ENCODE measurements at regions of chr9 and their contacts with region 1.

Region 1: GRCh38 chr9:111759762-111760639 is 34.7 kb downstream of the SHOC1 start:
- DNase-seq: no peak
- ATAC-seq: peak; percentile 82

Region 2: DNA sequence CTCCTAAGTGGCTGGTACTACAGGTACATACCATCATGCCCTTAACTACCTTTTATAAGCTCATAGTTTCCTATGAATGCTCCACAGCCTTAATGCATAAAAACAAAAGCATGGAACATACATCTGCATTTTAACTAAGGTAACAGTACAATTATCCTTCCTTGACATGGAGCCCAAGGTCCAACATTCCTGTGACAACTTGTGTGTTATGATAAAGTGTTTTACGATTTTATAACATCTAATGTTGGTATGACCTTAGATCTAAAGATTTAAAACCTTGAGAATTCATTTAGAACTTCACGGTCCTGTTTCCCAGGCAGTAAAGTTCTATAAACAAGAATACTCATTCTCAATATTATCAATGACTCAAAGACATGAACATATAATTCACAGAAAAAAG is 55.5 kb before region 1 on chr9:
- intact Hi-C with region 1: no loop called
- DNase-seq: no peak
- ATAC-seq: no peak

Region 3: GRCh38 chr9:112074250-112075008 is 314.4 kb after region 1 on chr9:
- intact Hi-C with region 1: loop called (anchors 1 kb)
- DNase-seq: peak; percentile 48
- ATAC-seq: peak; percentile 90

Region 4: DNA sequence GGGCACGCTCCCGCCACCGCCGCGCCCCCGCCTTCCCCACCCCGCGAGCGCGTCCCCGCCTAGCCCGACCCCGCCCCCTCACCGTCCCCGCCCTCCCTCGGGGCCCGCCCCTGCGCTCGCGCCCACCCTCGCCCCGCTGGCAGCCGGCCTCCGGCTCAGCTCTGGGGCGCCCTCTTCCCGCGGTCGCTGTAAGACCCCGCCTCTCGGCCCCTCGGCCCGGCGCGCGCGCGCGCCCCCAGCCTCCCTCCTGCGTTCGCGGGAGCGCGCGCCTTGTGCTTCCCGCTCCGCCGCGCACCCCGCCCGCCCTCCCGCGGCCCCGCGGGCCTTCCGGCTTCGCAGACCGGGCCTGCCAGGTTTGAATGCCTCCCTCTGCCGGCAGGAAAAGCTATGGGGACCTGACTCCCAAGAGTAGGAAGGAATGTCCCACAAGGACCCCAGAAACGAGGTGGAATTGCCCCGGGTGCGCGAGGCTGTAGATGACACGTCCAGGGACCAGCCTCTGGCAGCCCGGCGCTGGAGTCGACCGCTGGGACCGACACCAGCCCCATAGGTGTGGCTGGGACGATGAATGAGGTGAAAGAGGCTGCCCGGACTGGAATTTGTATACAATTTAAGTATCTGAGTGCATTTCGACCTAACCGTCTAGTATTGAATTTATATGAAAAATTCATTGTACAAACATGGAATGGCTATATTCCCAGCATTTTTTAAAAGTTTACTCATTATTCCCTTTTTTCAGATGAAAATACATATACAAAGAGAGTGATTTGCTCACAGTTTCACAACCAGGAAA is 573.8 kb after region 1 on chr9:
- intact Hi-C with region 1: no loop called
- DNase-seq: peak; percentile 98
- ATAC-seq: peak; percentile 97

Measured in left ventricle myocardium superior (tissue), 1 donor.